ENCODE measurements at regions of chr1 and their contacts with region 1.

Region 1: GRCh38 chr1:235328357-235329138 is at the start of gene GGPS1:
- DNase-seq: peak; percentile 90
- ATAC-seq: peak; percentile 75
- H3K4me3 Mint-ChIP-seq: no peak within 1 kb of the TSS
- H3K27ac Mint-ChIP-seq: no peak within 1 kb of the TSS
- H3K4me1 Mint-ChIP-seq: peaks cover 27% of the 10 kb centered on the region
- H3K27me3 Mint-ChIP-seq: no peaks in the 10 kb centered on the region
- CTCF ChIP-seq: no peak
- total RNA-seq, gene GGPS1: 25.4 and 33.8 TPM in 2 replicates

Region 2: GRCh38 chr1:234478481-234479309 is 849.9 kb before region 1 on chr1 and contains the start of gene TARBP1:
- CTCF ChIA-PET with region 1: no interaction called
- POLR2A ChIA-PET with region 1: no interaction called
- intact Hi-C with region 1: loop called (anchors 2 kb)
- DNase-seq: peak; percentile 82
- ATAC-seq: peak; percentile 66
- H3K4me3 Mint-ChIP-seq: peak within 1 kb of the TSS; percentile 85
- H3K27ac Mint-ChIP-seq: peak within 1 kb of the TSS; percentile 88
- H3K4me1 Mint-ChIP-seq: peaks cover 43% of the 10 kb centered on the region
- H3K27me3 Mint-ChIP-seq: peaks cover 5% of the 10 kb centered on the region
- CTCF ChIP-seq: no peak
- total RNA-seq, gene TARBP1: 27.0 and 30.4 TPM in 2 replicates

Region 3: GRCh38 chr1:235160957-235161684 is 167.4 kb before region 1 on chr1 and contains the start of gene RBM34:
- CTCF ChIA-PET with region 1: no interaction called
- POLR2A ChIA-PET with region 1: interaction called, 6 read pairs
- intact Hi-C with region 1: loop called (anchors 1 kb)
- DNase-seq: peak; percentile 90
- ATAC-seq: peak; percentile 94
- H3K4me3 Mint-ChIP-seq: peak within 1 kb of the TSS; percentile 96
- H3K27ac Mint-ChIP-seq: peak within 1 kb of the TSS; percentile 99
- H3K4me1 Mint-ChIP-seq: peaks cover 21% of the 10 kb centered on the region
- H3K27me3 Mint-ChIP-seq: no peaks in the 10 kb centered on the region
- CTCF ChIP-seq: no peak
- total RNA-seq, gene RBM34: 122 and 128 TPM in 2 replicates

Region 4: GRCh38 chr1:235298758-235299157 is 29.8 kb before region 1 on chr1:
- CTCF ChIA-PET with region 1: no interaction called
- POLR2A ChIA-PET with region 1: no interaction called
- intact Hi-C with region 1: loop called (anchors 2 kb)
- DNase-seq: no peak
- ATAC-seq: no peak
- H3K4me3 Mint-ChIP-seq: no peak overlapping the region
- H3K27ac Mint-ChIP-seq: no peak overlapping the region
- H3K4me1 Mint-ChIP-seq: peaks cover 62% of the 10 kb centered on the region
- H3K27me3 Mint-ChIP-seq: no peaks in the 10 kb centered on the region
- CTCF ChIP-seq: no peak

Region 5: DNA sequence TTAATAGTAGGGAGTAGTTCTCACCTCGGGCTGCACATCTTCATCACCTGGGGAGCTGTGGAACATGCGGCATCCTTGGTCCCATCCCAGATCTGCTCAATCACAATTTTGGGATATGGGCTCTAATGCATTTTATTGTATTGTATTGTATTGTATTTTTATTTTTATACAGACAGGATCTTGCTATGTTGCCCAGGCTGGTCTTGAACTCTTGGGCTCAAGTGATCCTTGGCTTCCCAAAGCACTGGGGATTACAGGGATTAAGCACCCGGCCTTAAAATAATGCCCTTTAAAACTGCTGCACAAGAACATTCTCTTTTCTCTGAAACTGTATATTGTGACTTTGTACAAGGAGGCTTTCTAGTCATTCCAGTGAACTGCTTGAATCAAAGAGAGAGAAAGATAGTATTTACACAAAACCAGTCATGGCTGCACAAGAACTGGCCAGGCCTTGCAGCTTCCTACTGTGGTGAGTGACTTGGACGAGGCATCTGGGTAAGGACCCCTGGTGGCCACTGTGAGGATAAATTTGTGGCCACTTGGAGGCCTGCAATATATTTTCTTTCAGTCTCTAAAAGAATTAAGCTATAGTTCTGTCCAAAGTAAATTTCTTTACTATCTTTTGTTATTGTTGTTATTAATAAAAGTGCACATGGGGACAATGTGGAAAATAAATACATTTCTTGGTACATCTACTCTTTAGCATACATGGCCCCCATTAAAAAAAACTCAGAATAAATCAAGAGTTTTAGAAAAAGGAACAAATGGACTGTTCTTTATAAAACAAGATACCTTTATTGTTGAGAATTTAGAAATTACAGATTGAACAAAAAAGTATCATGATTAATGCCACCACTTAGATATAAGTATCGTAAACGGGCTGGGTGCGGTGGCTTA is 86.7 kb after region 1 on chr1:
- CTCF ChIA-PET with region 1: interaction called, 6 read pairs
- POLR2A ChIA-PET with region 1: interaction called, 3 read pairs
- intact Hi-C with region 1: loop called (anchors 2 kb)
- DNase-seq: no peak
- ATAC-seq: peak; percentile 88
- H3K4me3 Mint-ChIP-seq: no peak overlapping the region
- H3K27ac Mint-ChIP-seq: no peak overlapping the region
- H3K4me1 Mint-ChIP-seq: peaks cover 2% of the 10 kb centered on the region
- H3K27me3 Mint-ChIP-seq: no peaks in the 10 kb centered on the region
- CTCF ChIP-seq: peak; percentile 34

Measured in activated B cell treated with CpG ODN at 0.5 μM for 24 hours (primary cell).